ENCODE measurements at regions of chr1 and their contacts with region 1.

Region 1: DNA sequence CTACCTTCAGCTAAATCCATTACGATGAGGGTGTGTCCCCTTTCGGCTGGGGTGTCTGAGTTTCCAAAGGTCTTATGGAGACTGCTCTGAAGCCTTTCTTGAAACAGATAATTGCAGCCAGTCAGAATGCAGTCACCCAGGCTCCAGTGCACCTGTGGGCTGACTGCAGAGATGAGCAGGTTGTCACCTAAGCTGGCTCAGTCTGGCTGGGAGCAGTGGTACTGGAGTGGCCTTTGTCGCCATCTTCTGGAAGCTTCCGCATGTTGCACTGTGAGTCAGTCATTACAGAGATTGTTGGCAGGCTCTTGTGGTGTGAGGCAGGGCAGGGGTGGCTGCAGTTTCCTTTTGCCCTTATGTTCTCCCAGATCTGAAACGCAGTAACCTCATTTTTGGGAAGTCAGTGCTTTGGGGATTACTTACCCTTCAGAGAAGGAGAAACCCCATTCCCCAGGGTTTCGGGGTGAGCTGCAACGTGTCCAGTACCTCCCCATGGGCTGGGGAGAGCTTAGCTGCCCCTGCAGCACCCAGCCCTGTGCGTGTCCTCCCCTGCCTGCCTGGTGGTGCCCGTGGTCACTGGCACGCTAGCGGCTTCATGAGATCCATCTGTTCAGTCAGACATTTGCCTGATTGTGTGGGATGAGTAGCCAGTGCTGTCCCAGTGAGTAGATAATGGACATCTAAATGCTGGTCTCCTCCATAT is 48.0 kb downstream of the SMYD2 start:
- DNase-seq: peak; percentile 90
- ATAC-seq: peak; percentile 84
- H3K4me3 Mint-ChIP-seq: no peak overlapping the region
- H3K27ac Mint-ChIP-seq: no peak overlapping the region
- H3K4me1 Mint-ChIP-seq: peaks cover 15% of the 10 kb centered on the region
- H3K27me3 Mint-ChIP-seq: no peaks in the 10 kb centered on the region
- CTCF ChIP-seq: peak; percentile 85

Region 2: DNA sequence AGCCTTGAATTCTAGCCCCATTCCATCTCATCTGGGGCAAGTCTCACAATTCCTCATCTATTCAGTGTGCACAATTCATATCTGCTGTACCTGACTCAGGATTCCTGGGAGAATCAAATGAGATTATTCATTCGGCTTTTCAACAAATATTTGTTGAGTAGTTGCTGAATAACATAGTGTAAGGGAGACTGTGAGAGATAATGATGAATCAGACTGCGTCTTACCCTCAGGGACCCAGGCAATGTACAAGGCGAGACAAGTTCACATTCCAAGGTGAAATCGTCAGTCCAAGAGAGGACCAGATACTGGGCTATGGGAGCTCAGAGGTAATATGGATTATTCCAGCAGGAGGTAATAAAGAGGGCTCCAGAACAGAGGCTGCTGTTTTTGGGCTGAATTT is 115.8 kb before region 1 on chr1:
- CTCF ChIA-PET with region 1: interaction called, 382 read pairs
- POLR2A ChIA-PET with region 1: no interaction called
- DNase-seq: no peak
- ATAC-seq: no peak
- H3K4me3 Mint-ChIP-seq: no peak overlapping the region
- H3K27ac Mint-ChIP-seq: no peak overlapping the region
- H3K4me1 Mint-ChIP-seq: peaks cover 26% of the 10 kb centered on the region
- H3K27me3 Mint-ChIP-seq: no peaks in the 10 kb centered on the region
- CTCF ChIP-seq: no peak

Region 3: DNA sequence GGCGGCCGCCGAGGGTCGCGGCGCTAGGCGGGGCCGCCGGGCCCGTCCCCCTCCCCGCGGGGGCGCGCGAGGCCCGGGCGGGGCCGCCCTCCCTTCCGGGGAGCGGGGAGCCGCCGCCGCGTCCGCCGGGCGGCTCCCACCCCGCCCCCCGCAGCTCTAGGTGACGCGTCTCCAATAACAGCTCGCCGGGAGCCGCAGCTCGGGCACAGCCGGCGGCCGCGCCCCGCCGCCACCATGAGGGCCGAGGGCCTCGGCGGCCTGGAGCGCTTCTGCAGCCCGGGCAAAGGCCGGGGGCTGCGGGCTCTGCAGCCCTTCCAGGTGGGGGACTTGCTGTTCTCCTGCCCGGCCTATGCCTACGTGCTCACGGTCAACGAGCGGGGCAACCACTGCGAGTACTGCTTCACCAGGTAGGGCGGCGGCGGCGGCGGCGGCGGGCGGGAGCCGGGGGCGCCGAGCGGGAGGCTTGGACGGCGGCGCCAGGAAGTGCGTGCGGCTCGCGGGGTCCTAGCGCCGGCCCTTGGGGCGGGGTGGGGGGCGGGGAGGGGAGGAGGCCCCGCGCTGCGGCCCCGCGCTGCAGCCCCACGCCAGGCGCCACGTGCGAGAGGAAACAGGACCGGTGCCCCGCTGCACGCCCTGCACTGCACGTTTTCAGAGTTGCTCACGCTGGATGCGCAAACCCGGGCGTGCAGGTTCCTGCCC is 47.8 kb before region 1 on chr1 and contains the start of gene SMYD2:
- CTCF ChIA-PET with region 1: interaction called, 31 read pairs
- POLR2A ChIA-PET with region 1: no interaction called
- DNase-seq: peak; percentile 75
- ATAC-seq: peak; percentile 65
- H3K4me3 Mint-ChIP-seq: peak within 1 kb of the TSS; percentile 83
- H3K27ac Mint-ChIP-seq: peak within 1 kb of the TSS; percentile 82
- H3K4me1 Mint-ChIP-seq: peaks cover 37% of the 10 kb centered on the region
- H3K27me3 Mint-ChIP-seq: peaks cover 59% of the 10 kb centered on the region
- CTCF ChIP-seq: no peak
- total RNA-seq, gene SMYD2: 6.3 to 6.8 TPM (median 6.4 TPM) in 3 replicates

Region 4: DNA sequence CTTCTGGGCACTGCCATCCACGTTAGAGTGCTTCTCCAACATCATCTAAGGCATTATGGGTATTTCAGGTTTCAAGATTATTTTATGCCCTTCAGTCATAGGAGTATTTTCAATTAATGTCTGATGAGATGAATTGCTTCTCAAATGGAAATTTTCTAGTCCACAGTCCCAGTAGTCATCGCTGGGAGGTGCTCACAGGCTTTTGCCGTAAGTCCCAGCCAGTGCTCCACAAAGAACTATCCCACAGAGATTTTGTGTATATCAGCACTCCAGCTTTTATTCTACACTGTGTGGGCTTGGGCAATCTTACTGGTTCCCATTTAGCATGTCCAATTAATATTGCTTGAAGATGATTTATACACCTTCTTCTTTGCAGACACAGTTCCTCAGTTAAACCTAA is 13.0 kb after region 1 on chr1:
- CTCF ChIA-PET with region 1: interaction called, 27 read pairs
- POLR2A ChIA-PET with region 1: no interaction called
- DNase-seq: no peak
- ATAC-seq: peak; percentile 16; the same call in 1 of the 2 replicates
- H3K4me3 Mint-ChIP-seq: no peak overlapping the region
- H3K27ac Mint-ChIP-seq: no peak overlapping the region
- H3K4me1 Mint-ChIP-seq: peaks cover 29% of the 10 kb centered on the region
- H3K27me3 Mint-ChIP-seq: no peaks in the 10 kb centered on the region
- CTCF ChIP-seq: no peak

Region 5: GRCh38 chr1:214551436-214552173 is 222.7 kb after region 1 on chr1 and contains the start of gene PTPN14:
- CTCF ChIA-PET with region 1: interaction called, 33 read pairs
- POLR2A ChIA-PET with region 1: interaction called, 5 read pairs
- DNase-seq: peak; percentile 94
- ATAC-seq: peak; percentile 78
- H3K4me3 Mint-ChIP-seq: peak within 1 kb of the TSS; percentile 93
- H3K27ac Mint-ChIP-seq: peak within 1 kb of the TSS; percentile 100
- H3K4me1 Mint-ChIP-seq: peaks cover 49% of the 10 kb centered on the region
- H3K27me3 Mint-ChIP-seq: no peaks in the 10 kb centered on the region
- CTCF ChIP-seq: no peak
- total RNA-seq, gene PTPN14: 83.3 to 88.4 TPM (median 86.4 TPM) in 3 replicates

Region 6: DNA sequence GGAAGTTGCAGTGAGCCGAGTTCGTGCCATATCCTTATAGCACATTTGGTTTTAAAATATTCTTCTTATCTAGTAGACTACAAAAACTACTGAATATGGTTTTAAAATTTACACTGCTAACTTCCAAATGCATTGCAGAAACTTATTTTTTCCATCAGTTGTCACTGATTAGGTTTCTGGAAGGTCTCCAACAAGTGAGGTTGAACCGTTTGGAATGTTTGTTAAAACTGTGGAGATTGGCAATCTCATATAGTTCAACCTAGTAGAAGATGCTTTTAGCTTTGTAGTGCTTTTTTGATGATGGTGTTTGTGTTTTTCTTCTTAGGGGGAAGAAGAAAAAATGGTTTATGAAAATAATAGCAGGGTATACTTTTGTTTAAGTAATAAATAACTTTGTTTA is 287.0 kb after region 1 on chr1:
- CTCF ChIA-PET with region 1: interaction called, 11 read pairs
- POLR2A ChIA-PET with region 1: no interaction called
- DNase-seq: no peak
- ATAC-seq: no peak
- H3K4me3 Mint-ChIP-seq: no peak overlapping the region
- H3K27ac Mint-ChIP-seq: no peak overlapping the region
- H3K4me1 Mint-ChIP-seq: peaks cover 11% of the 10 kb centered on the region
- H3K27me3 Mint-ChIP-seq: no peaks in the 10 kb centered on the region
- CTCF ChIP-seq: no peak

Measured in WTC11 (cell line).